ENCODE measurements at regions of chr9 and their contacts with region 1.

Region 1: GRCh38 chr9:130712564-130713285 is 19.1 kb downstream of the EXOSC2 start:
- DNase-seq: peak; percentile 98 to 99 (median 99)
- H3K4me3 ChIP-seq: peak overlapping the region; percentile 48 to 70 (median 65)
- H3K27ac ChIP-seq: peak overlapping the region; percentile 94 to 97
- H3K4me1 ChIP-seq: peaks cover 0 to 6% (median 3%) of the 10 kb centered on the region in 3 donors
- H3K27me3 ChIP-seq: no peaks in the 10 kb centered on the region
- CTCF ChIP-seq: no peak

Region 2: DNA sequence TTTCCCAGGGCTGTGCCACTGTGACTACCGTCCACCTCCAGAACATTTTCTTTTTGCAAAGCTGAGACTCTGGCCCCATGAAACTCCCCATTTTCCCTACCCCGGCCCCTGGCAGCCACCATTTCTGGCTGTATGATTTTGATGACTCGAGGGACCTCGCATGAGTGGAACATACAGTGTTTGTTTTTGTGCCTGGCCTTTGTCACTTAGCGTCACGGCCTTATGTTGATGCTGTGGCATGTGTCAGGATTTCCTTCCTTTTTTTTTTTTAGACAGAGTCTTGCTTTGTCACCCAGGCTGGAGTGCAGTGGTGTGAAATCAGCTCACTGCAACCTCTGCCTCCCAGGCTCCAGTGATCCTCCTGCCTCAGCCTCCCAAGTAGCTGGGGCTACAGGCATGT is 225.2 kb before region 1 on chr9:
- intact Hi-C with region 1: no loop called
- DNase-seq: no peak
- H3K4me3 ChIP-seq: no peak overlapping the region
- H3K27ac ChIP-seq: no peak overlapping the region
- H3K4me1 ChIP-seq: no peaks in the 10 kb centered on the region
- H3K27me3 ChIP-seq: no peaks in the 10 kb centered on the region
- CTCF ChIP-seq: no peak

Region 3: DNA sequence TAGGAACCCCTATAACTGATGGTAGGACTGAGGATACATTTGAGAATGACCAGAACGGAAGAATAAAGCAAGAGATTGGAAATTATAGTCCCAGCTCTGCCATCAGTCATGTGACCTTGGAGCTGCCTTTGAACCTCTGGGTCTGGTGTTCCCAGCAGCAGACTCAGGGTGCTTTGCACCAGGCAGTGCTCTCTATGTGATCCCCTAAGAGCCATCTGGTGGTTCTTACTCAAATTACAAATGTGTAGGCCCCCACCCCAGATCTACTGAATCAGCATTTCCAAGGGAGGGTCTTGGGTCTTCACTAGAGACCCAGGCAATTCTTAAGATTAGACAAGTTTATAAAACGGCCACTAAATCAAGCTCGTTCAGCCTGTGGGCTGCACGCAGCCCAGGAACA is 88.6 kb before region 1 on chr9:
- intact Hi-C with region 1: no loop called
- DNase-seq: no peak
- H3K4me3 ChIP-seq: no peak overlapping the region
- H3K27ac ChIP-seq: no peak overlapping the region
- H3K4me1 ChIP-seq: no peaks in the 10 kb centered on the region
- H3K27me3 ChIP-seq: no peaks in the 10 kb centered on the region
- CTCF ChIP-seq: no peak

Region 4: GRCh38 chr9:130860458-130861316 is 148.0 kb after region 1 on chr9:
- intact Hi-C with region 1: loop called (anchors 5 kb)
- DNase-seq: peak; percentile 78 to 95 (median 84)
- H3K4me3 ChIP-seq: no peak overlapping the region
- H3K27ac ChIP-seq: peak overlapping the region; percentile 8 to 32
- H3K4me1 ChIP-seq: peaks cover 0 to 25% (median 2%) of the 10 kb centered on the region in 3 donors
- H3K27me3 ChIP-seq: no peaks in the 10 kb centered on the region
- CTCF ChIP-seq: peak; percentile 72

Measured in kidney (tissue), 22 donors.